Natural killer cell (primary cell): ENCODE measurements at regions of chr3 and their contacts with region 1.

Region 1: DNA sequence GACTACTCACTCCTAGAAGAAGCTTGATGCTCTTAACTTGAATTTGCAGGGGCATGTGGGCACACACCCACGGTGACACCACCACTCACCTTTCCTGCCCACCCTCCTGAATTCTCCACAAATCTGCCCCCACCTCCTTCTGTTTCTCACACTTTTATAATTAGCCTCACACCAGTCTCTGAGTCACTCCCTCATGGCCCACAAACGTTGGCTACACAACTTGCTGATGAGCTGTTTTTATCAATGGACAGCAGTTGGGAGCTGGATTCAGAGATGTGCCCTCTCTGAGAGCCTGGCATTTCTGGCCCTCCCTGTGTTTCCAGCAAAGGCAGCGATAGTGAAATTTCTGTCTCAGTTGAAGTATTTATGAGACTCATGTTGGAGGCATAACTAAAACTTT is 1.3 kb downstream of the COLQ start:
- DNase-seq: peak; percentile 26 to 53
- ATAC-seq: peak; percentile 87 to 95 (median 88)
- H3K4me3 ChIP-seq: peak overlapping the region; percentile 34
- H3K4me3 Mint-ChIP-seq: peak overlapping the region; percentile 90
- H3K27ac ChIP-seq: peak overlapping the region; percentile 69
- H3K27ac Mint-ChIP-seq: peak overlapping the region; percentile 85 to 92
- H3K4me1 ChIP-seq: peaks cover 50% of the 10 kb centered on the region
- H3K4me1 Mint-ChIP-seq: peaks cover 52 to 69% of the 10 kb centered on the region in 2 donors
- H3K27me3 ChIP-seq: no peaks in the 10 kb centered on the region
- H3K27me3 Mint-ChIP-seq: no peaks in the 10 kb centered on the region
- CTCF ChIP-seq: no peak

Region 2: GRCh38 chr3:15467227-15468181 is 52.7 kb before region 1 on chr3:
- intact Hi-C with region 1: loop called (anchors 5 kb)
- DNase-seq: peak in 1 of 2 donors; percentile 36
- ATAC-seq: peak; percentile 72 to 89 (median 82)
- H3K4me3 ChIP-seq: no peak overlapping the region
- H3K4me3 Mint-ChIP-seq: peak overlapping the region; percentile 77
- H3K27ac ChIP-seq: peak overlapping the region; percentile 65
- H3K27ac Mint-ChIP-seq: peak overlapping the region; percentile 94 to 95
- H3K4me1 ChIP-seq: peaks cover 36% of the 10 kb centered on the region
- H3K4me1 Mint-ChIP-seq: peaks cover 47 to 54% of the 10 kb centered on the region in 2 donors
- H3K27me3 ChIP-seq: no peaks in the 10 kb centered on the region
- H3K27me3 Mint-ChIP-seq: no peaks in the 10 kb centered on the region
- CTCF ChIP-seq: no peak

Region 3: DNA sequence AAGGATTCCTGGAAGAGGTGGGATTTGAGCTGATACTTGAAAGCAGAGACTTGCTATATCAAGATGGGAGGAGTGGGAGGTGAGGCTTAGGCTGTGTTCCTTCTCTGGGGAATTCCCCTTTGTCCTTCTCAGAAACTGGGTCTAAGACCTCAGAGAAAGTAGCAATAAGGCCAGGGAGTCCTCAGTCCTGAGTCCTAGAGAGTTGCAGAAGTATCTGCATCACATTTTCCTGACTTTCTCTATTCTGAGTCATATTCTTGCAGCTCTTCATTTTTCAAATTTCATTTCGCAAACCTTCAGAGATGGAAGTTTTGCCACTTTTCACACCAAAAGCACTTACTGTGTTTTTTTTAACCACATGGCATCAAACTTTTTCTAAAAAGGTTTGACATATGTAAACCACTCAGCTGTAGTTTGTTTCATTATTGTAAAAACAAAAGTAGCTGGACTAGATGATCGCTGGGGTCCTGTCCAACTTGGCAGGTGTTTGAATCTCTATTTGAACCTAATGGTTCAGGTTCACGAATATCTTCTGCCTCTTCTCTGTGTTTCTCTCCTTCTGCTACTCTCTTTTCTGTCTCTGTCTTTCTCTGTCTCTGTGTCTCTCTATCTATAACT is 20.0 kb before region 1 on chr3:
- intact Hi-C with region 1: loop called (anchors 1 kb)
- DNase-seq: peak in 1 of 2 donors; percentile 29
- ATAC-seq: peak; percentile 56 to 78 (median 73)
- H3K4me3 ChIP-seq: no peak overlapping the region
- H3K4me3 Mint-ChIP-seq: peak overlapping the region; percentile 75
- H3K27ac ChIP-seq: peak overlapping the region; percentile 57
- H3K27ac Mint-ChIP-seq: peak overlapping the region; percentile 84 to 87
- H3K4me1 ChIP-seq: peaks cover 52% of the 10 kb centered on the region
- H3K4me1 Mint-ChIP-seq: peaks cover 68 to 76% of the 10 kb centered on the region in 2 donors
- H3K27me3 ChIP-seq: no peaks in the 10 kb centered on the region
- H3K27me3 Mint-ChIP-seq: no peaks in the 10 kb centered on the region
- CTCF ChIP-seq: no peak

Region 4: DNA sequence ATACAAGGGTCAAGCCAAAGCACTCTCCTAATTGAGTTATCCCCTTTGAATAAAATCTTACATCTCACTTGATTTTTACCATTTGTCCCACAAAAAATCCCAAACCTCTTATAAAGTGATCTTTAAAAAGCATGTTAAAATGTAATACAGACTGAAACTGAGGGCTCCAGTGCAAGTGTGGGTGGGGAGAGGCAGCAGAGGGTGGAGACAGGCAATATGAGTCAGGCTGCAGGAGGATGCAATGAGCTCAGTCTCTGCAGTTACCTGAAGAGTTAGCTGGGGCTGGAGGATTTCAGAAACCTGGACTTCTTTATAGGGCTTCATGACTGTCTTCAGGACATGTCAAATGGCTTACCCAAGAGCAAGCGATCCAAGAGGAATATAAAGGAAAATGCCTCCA is 15.5 kb after region 1 on chr3:
- intact Hi-C with region 1: loop called (anchors 2 kb)
- DNase-seq: peak in 1 of 2 donors; percentile 41
- ATAC-seq: peak; percentile 67 to 95 (median 83)
- H3K4me3 ChIP-seq: no peak overlapping the region
- H3K4me3 Mint-ChIP-seq: peak overlapping the region; percentile 95
- H3K27ac ChIP-seq: peak overlapping the region; percentile 64
- H3K27ac Mint-ChIP-seq: peak overlapping the region; percentile 83 to 96
- H3K4me1 ChIP-seq: peaks cover 44% of the 10 kb centered on the region
- H3K4me1 Mint-ChIP-seq: peaks cover 61 to 64% of the 10 kb centered on the region in 2 donors
- H3K27me3 ChIP-seq: no peaks in the 10 kb centered on the region
- H3K27me3 Mint-ChIP-seq: no peaks in the 10 kb centered on the region
- CTCF ChIP-seq: no peak